GM13976 (cell line): ENCODE measurements at regions of chr11 and their contacts with region 1.

Region 1: DNA sequence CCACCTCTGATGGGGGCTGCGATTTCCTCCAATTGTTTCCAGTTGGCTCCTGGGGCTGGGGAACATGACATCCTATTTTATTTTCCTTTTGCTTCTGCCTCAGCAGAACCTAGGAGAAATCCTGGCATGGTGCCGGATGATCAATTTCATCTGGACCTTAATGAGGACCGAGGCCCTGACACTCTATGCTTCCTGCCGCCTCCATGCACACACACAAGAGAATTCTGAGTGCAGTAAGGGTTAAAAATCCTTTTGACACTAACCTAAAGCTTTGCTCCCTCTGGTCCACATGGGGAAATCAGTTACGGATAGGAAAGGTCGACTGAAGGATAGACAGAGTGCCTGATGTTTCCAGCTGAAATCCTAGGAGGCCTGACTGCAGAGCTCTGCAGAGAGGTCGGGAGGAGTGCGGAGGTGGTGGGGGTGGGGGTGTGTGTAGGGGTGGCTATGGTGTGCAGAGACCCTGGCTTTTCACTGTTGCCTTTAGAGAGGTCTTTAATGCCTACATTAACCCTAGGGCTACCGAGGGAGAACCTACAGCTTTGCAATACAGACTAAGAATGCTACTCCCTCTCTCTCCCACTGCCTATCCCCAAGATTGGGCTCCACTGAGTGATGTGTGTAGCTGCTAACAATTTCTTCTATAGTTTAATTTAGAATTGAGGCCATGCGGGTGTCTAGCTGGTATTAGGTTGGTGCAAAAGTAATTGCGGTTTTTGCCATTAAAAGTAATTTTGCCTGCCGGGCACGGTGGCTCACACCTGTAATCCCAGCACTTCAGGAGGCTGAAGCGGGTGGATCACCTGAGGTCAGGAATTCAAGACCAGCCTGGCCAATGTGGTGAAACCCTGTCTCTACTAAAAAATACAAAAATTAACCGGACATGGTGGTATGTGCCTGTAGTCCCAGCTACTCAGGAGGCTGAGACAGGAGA is 53.6 kb upstream of the INCENP start:
- DNase-seq: no peak
- CTCF ChIP-seq: no peak

Region 2: DNA sequence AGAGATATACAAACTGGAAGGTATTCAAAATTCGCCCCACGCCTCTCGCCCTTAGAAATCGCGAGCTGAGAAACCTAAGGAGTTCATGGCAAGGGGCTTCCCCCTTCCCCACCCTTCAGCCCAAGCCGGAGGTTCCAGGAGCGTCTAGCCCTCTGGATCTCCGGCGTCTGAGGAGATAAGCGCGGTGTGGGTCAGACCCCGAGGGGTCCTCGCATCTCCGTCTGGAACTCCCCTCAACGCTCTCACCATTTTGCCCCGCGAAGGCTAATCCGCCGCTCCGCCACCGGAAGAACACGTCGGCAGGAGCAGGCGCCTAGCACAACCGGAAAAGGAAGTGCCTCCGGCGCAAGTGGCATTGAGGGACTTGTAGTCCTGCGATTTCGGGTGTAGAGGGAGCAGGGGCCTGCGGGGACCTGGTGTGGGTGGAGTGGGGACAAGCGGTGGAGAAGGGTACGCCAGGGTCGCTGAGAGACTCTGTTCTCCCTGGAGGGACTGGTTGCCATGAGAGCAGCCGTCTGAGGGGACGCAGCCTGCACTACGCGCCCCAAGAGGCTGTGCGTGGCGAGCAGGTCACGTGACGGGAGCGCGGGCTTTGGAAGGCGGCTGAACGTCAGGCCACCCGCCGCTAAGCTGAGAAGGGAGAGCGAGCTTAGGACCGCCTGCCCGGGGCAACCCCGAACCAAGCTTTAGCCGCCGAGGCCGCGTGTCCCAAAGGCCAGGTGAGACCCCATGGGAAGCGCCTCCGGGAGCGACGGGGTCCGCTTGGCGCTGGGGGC is 277.8 kb before region 1 on chr11 and contains the starts of genes FEN1 and TMEM258:
- in situ Hi-C with region 1: loop called (anchors 10 kb)
- DNase-seq: peak; percentile 94
- CTCF ChIP-seq: no peak

Region 3: DNA sequence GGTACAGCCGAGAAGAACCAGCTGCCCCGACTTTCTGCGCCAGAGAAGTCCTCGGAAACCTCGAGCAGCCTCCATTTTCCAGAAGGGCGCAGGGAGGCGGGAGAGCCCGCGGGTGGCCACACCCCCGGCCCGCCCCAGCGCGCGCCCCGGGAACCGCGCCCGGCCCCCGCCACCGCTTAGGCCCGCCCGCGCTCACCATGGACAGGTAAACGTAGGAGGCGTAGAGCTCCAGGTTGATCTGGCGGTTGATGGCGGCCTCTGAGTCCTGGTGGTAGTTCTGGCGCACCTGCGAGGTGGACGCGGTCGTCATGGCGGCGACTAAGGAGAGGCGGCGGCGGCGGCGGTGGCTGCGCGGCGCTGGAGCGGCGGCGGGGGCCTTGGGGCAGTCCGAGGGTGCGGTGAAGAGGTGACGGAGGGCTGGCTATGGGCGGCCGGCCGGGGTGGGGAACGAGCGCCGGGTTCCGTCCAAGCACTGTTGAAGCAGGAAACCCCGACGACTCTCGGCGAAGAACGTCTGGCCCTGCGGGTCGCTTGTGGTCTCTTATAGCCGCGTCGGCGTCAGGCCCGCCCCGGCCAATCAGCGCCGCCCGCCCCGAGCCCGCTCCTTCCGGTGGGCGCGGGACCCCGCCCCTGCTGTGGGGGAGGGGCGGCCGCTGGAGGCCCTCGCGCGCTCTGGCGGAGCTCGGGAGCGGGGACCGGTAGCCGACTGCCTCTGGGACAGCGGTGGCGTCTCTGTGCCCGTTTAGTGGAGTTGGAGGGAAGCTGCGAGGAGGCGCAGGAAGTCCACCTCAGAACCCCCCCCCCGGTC is 102.9 kb before region 1 on chr11 and contains the start of gene FTH1:
- in situ Hi-C with region 1: loop called (anchors 10 kb)
- DNase-seq: peak; percentile 95
- CTCF ChIP-seq: no peak

Region 4: GRCh38 chr11:62472012-62472884 is 402.0 kb after region 1 on chr11:
- in situ Hi-C with region 1: no loop called
- DNase-seq: no peak
- CTCF ChIP-seq: no peak